Breast epithelium (tissue), 4 donors: ENCODE measurements at regions of chrX and their contacts with region 1.

Region 1: DNA sequence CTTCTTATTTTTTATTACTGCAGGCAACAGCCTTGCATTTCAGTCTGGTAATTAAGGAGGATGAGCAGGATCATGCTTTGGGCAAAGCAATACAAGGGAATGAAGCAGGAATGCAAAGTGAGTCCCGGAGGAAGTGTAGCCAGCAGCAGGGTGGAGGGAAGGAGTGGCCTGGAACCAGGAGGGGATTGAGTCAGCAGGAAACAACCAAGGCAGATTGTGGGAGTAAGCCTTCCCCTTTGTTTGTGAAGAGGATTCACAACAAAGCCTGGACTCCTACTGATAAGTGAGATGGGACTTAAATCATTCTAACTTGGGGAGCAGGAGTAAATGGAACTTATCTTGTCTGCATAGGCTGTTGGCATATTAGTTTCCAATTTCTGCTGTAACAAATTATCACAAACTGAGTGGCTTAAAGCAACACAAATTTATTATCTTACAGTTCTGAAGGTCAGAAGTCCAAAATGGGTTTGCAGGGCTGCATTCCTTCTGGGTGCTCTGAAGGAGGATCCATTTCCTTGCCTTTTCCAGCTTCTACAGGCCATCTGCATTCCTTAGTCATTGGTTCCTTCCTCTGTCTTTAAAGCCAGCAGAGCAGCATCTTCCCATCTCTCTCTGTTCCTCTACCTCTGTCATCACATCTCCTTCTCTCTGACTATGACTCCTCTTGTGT is 93.2 kb upstream of the AP1S2 start:
- DNase-seq: no peak
- H3K4me3 ChIP-seq: no peak overlapping the region
- H3K27ac ChIP-seq: no peak overlapping the region
- H3K4me1 ChIP-seq: no peaks in the 10 kb centered on the region
- H3K27me3 ChIP-seq: peaks cover 0 to 44% of the 10 kb centered on the region in 2 donors
- CTCF ChIP-seq: no peak
- POLR2A ChIP-seq: no peak

Region 2: GRCh38 chrX:14851526-14851925 is 1096.3 kb before region 1 on chrX:
- intact Hi-C with region 1: no loop called
- DNase-seq: no peak
- H3K4me3 ChIP-seq: no peak overlapping the region
- H3K27ac ChIP-seq: no peak overlapping the region
- H3K4me1 ChIP-seq: no peaks in the 10 kb centered on the region
- H3K27me3 ChIP-seq: peaks cover 0 to 7% of the 10 kb centered on the region in 2 donors
- CTCF ChIP-seq: no peak
- POLR2A ChIP-seq: no peak

Region 3: DNA sequence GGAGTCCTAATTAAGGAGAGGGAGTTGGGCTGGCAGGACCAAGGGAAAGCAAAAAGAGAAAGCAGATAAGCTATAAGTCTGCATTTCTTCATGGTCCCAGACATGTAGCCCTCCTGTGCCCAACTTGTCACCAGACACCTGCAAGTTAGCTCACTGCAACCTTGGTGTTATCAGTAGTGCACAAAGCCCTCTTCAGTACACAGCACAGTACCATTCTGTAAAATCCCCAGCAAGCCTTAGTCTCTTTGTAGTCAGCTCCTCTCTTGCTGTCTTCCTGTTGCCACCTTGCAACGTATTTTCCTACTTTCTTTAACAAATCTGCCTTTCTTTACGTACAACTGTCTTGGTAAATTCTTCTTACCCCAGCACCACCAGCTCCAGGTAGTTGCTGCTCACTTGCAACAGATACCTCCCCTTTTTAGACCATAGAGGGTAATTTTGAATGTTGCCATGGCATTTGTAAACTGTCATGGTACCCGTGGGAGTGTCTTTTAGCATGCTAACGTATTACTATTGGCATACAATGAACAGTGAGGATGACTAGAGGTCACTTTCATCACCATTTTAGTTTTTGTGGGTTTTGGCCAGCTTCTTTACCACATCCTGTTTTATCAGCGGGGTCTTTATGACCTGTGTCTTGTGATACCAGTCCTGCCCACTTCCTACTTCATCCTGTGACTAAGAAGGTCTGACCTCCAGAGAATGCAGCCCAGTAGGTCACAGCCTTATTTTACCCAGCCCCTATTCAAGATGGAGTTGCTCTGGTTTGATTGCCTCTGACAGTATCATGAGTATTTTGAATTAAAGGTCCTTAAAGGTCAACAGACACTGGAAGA is 64.9 kb before region 1 on chrX:
- intact Hi-C with region 1: loop called (anchors 2 kb)
- DNase-seq: no peak
- H3K4me3 ChIP-seq: no peak overlapping the region
- H3K27ac ChIP-seq: no peak overlapping the region
- H3K4me1 ChIP-seq: no peaks in the 10 kb centered on the region
- H3K27me3 ChIP-seq: peaks cover 0 to 52% of the 10 kb centered on the region in 2 donors
- CTCF ChIP-seq: no peak
- POLR2A ChIP-seq: no peak